HAP-1 (cell line): ENCODE measurements at regions of chr3 and their contacts with region 1.

Region 1: GRCh38 chr3:69671082-69671952 is 67.9 kb upstream of the MITF start:
- DNase-seq: peak; percentile 70 to 71
- H3K4me3 ChIP-seq: no peak overlapping the region
- H3K4me1 ChIP-seq: no peaks in the 10 kb centered on the region
- H3K27me3 ChIP-seq: no peaks in the 10 kb centered on the region

Region 2: GRCh38 chr3:68817243-68817642 is 854.1 kb before region 1 on chr3:
- in situ Hi-C with region 1: no loop called
- DNase-seq: no peak
- H3K4me3 ChIP-seq: no peak overlapping the region
- H3K4me1 ChIP-seq: peaks cover 10% of the 10 kb centered on the region
- H3K27me3 ChIP-seq: no peaks in the 10 kb centered on the region

Region 3: GRCh38 chr3:69324362-69325025 is 346.8 kb before region 1 on chr3:
- in situ Hi-C with region 1: loop called (anchors 5 kb)
- DNase-seq: peak; percentile 33 to 59
- H3K4me3 ChIP-seq: no peak overlapping the region
- H3K4me1 ChIP-seq: peaks cover 3% of the 10 kb centered on the region
- H3K27me3 ChIP-seq: no peaks in the 10 kb centered on the region